ENCODE measurements at regions of chr10 and their contacts with region 1.

Region 1: DNA sequence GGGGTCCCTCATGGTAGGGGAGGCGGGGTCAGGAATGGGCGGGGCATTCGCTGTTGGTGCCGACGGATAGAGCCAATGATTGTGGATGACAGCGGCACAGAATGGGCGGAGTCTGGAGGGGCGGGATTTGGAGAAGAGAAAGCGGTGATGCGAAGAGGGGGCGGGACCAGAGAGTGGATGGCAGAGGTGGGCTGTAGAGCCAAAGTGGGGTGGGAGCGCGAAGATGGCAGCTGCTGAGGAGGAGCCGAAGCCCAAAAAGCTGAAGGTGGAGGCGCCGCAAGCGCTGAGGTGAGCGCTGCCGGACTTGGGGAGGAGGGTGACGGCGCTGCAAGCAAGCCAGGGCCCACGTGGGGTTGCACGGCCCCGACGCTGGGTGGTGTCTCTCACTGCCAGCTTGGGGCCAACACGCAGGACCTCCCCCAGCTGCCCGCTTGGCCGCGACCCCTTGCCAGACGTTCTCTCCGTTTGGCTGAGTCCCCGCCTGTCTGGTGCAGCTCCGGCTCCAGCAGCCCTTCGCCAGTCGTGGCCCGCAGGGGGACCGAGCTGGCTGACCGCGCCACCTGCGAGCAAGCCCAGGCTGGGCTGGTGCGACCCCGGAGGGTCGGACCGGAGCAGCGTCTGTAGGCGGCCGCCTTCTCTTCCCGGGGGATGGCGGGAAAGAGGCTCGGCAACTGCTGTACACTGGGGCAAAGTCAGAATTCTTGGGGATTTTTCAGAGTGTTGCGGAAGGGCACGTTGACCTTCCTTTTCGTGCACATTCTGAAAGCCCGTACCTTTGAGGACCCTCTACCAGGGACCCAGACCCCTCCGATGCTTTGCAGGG is at the start of gene ADK:
- DNase-seq: peak; percentile 100
- ATAC-seq: peak; percentile 95
- H3K4me3 Mint-ChIP-seq: no peak within 1 kb of the TSS
- H3K27ac Mint-ChIP-seq: no peak within 1 kb of the TSS
- H3K4me1 Mint-ChIP-seq: peaks cover 24% of the 10 kb centered on the region
- H3K27me3 Mint-ChIP-seq: no peaks in the 10 kb centered on the region
- total RNA-seq, gene ADK: 40.2 to 42.1 TPM

Region 2: GRCh38 chr10:74167443-74167842 is 16.2 kb after region 1 on chr10:
- CTCF ChIA-PET with region 1: interaction called, 11 read pairs
- POLR2A ChIA-PET with region 1: interaction called, 10 read pairs
- DNase-seq: no peak
- ATAC-seq: no peak
- H3K4me3 Mint-ChIP-seq: no peak overlapping the region
- H3K27ac Mint-ChIP-seq: no peak overlapping the region
- H3K4me1 Mint-ChIP-seq: peaks cover 35% of the 10 kb centered on the region
- H3K27me3 Mint-ChIP-seq: no peaks in the 10 kb centered on the region

Region 3: GRCh38 chr10:74176380-74177139 is 25.3 kb after region 1 on chr10:
- CTCF ChIA-PET with region 1: interaction called, 4 read pairs
- POLR2A ChIA-PET with region 1: interaction called, 20 read pairs
- DNase-seq: peak; percentile 98
- ATAC-seq: peak; percentile 96
- H3K4me3 Mint-ChIP-seq: peak overlapping the region; percentile 91
- H3K27ac Mint-ChIP-seq: peak overlapping the region; percentile 97
- H3K4me1 Mint-ChIP-seq: peaks cover 33% of the 10 kb centered on the region
- H3K27me3 Mint-ChIP-seq: no peaks in the 10 kb centered on the region

Region 4: DNA sequence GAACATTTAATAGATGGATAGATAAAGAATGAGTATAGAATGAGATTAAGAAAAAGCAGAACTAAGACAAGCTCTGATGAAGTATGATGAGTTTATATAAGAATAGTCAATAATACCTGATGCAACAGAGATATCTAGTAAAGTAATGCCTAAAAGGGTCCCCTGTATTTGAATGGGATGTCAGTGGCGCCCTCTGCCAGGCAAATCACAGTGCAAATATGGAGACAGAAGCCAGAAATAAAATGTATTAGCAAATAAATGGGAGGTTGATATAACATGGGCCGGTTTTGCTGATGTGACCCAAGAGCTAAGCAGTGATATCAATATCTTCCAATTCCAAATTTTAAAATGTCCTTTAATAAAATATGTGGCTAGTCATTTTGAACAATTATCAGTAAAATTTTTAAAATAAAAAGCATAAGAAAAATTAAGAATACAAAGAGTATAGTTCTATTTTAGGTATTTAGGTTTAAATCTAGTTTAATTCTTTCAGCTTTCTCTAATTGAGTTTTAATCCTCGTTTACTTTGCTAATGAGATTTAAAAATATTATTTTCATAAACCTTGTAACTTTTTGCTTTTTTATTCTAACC is 62.4 kb after region 1 on chr10:
- CTCF ChIA-PET with region 1: interaction called, 27 read pairs
- POLR2A ChIA-PET with region 1: interaction called, 3 read pairs
- DNase-seq: peak; percentile 59
- ATAC-seq: no peak
- H3K4me3 Mint-ChIP-seq: no peak overlapping the region
- H3K27ac Mint-ChIP-seq: no peak overlapping the region
- H3K4me1 Mint-ChIP-seq: peaks cover 6% of the 10 kb centered on the region
- H3K27me3 Mint-ChIP-seq: no peaks in the 10 kb centered on the region

Region 5: GRCh38 chr10:74234569-74234968 is 83.3 kb after region 1 on chr10:
- CTCF ChIA-PET with region 1: interaction called, 10 read pairs
- POLR2A ChIA-PET with region 1: interaction called, 3 read pairs
- DNase-seq: no peak
- ATAC-seq: no peak
- H3K4me3 Mint-ChIP-seq: no peak overlapping the region
- H3K27ac Mint-ChIP-seq: no peak overlapping the region
- H3K4me1 Mint-ChIP-seq: peaks cover 13% of the 10 kb centered on the region
- H3K27me3 Mint-ChIP-seq: no peaks in the 10 kb centered on the region